Natural killer cell (primary cell): ENCODE measurements at regions of chrX and their contacts with region 1.

Region 1: GRCh38 chrX:55160685-55161552 is 59.2 kb upstream of the PAGE5 start:
- DNase-seq: peak; percentile 89 to 92
- ATAC-seq: peak; percentile 80 to 91 (median 85)
- H3K4me3 ChIP-seq: peak overlapping the region; percentile 84
- H3K4me3 Mint-ChIP-seq: peak overlapping the region; percentile 87
- H3K27ac ChIP-seq: peak overlapping the region; percentile 99
- H3K27ac Mint-ChIP-seq: peak overlapping the region; percentile 94 to 98
- H3K4me1 ChIP-seq: peaks cover 8% of the 10 kb centered on the region
- H3K4me1 Mint-ChIP-seq: peaks cover 6 to 23% of the 10 kb centered on the region in 2 donors
- H3K27me3 ChIP-seq: no peaks in the 10 kb centered on the region
- H3K27me3 Mint-ChIP-seq: peaks cover 8 to 17% of the 10 kb centered on the region in 2 donors
- CTCF ChIP-seq: peak; percentile 58

Region 2: GRCh38 chrX:53422086-53422860 is 1738.6 kb before region 1 on chrX and contains the start of gene SMC1A:
- intact Hi-C with region 1: loop called (anchors 5 kb)
- DNase-seq: peak; percentile 89 to 97
- ATAC-seq: peak; percentile 86 to 96 (median 86)
- H3K4me3 ChIP-seq: peak within 1 kb of the TSS; percentile 98
- H3K4me3 Mint-ChIP-seq: peak within 1 kb of the TSS; percentile 98
- H3K27ac ChIP-seq: peak within 1 kb of the TSS; percentile 99
- H3K27ac Mint-ChIP-seq: peak within 1 kb of the TSS; percentile 97 to 99
- H3K4me1 ChIP-seq: peaks cover 19% of the 10 kb centered on the region
- H3K4me1 Mint-ChIP-seq: peaks cover 25 to 28% of the 10 kb centered on the region in 2 donors
- H3K27me3 ChIP-seq: no peaks in the 10 kb centered on the region
- H3K27me3 Mint-ChIP-seq: no peaks in the 10 kb centered on the region
- CTCF ChIP-seq: no peak
- total RNA-seq, gene SMC1A: 54.2 to 96.3 (median 60.4) TPM

Region 3: DNA sequence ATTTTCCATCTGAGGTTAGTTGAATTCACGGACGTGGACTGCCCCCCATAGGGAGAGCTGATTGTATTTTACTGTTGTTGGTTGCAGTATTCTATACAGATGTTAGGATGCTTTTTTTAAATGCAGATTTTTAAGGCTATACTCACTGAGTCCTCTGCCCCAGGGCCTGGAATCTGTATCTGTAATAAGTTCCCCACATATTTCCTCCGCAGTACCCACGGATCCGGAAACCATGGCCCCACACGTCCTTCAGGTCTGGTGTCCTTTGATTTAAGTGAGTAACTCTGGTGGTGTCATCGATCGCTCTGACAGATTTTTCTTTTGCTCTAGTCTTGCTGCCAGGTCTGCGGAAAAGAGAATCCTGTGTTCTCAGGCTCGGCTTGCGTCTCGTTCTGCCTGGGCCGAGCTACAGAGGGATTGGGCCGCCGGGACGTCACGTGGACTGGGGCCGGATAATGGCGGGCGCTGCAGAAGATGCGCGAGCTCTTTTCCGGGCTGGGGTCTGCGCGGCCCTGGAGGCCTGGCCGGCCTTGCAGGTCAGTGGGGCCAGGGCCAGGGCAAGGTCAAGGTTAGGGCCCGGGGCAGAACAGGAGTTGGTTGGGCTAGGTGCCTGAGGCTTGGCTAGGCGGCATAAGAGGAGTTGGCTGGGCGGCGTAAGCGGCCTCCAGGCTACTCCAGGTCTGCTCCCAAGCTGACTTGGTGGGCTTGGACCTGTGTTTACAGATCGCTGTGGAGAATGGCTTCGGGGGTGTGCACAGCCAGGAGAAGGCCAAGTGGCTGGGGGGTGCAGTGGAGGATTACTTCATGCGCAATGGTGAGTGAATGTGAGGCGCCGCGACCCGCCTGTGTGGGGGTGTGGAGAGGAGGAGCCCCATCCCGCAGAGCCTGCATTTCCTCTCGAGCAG is 720.7 kb before region 1 on chrX and contains the start of gene TSR2:
- intact Hi-C with region 1: loop called (anchors 1 kb)
- DNase-seq: peak; percentile 75 to 87
- ATAC-seq: peak; percentile 95 to 99 (median 97)
- H3K4me3 ChIP-seq: peak within 1 kb of the TSS; percentile 99
- H3K4me3 Mint-ChIP-seq: peak within 1 kb of the TSS; percentile 99
- H3K27ac ChIP-seq: peak within 1 kb of the TSS; percentile 73
- H3K27ac Mint-ChIP-seq: peak within 1 kb of the TSS; percentile 87 to 99
- H3K4me1 ChIP-seq: peaks cover 20% of the 10 kb centered on the region
- H3K4me1 Mint-ChIP-seq: peaks cover 14 to 37% of the 10 kb centered on the region in 2 donors
- H3K27me3 ChIP-seq: no peaks in the 10 kb centered on the region
- H3K27me3 Mint-ChIP-seq: peaks cover 3 to 16% of the 10 kb centered on the region in 2 donors
- CTCF ChIP-seq: no peak
- total RNA-seq, gene TSR2: 39.0 to 40.4 (median 40.0) TPM

Region 4: DNA sequence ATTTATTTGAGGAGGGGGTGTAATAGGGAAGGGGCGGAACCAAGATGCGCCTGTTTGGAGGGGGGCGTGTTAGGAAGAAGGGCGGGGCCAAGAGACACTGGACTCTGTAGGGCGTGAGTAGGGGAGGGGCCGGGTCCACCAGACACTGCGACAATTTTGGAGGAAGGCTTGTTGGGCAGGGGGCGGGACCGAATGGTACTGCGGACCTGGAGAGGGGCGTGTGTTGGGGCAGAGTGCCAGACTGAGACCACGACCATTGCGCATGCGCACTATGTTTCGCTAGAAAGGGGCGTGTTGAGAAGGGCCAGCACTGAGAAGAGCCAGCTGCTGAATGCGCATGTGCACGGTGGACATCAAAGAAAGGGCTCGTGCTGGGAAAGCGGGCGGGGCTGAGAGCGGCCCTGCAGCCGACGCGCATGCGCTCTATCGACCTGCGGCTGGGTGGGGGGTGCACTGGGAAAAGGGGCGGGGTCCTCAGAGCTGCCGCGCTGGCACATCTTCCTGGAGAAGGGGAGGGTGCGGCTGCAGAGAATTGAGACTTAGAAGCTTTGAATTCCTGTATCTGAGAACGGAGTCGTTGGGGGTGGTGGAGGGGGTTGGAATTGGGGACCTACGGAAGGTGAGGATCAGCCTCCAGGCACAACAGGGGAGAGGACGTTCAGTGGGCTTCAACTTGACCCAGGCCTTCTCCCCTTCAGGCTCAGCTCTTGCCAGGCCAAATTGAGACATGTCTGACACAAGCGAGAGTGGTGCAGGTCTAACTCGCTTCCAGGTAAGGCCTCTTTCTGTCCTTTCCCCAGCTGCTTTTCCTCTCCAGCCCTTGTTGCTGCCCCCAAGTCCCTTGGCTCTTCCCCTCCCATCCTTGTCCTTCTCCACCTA is 352.1 kb before region 1 on chrX:
- intact Hi-C with region 1: loop called (anchors 5 kb)
- DNase-seq: peak; percentile 75 to 96
- ATAC-seq: peak; percentile 81 to 89 (median 83)
- H3K4me3 ChIP-seq: peak overlapping the region; percentile 99
- H3K4me3 Mint-ChIP-seq: peak overlapping the region; percentile 88
- H3K27ac ChIP-seq: peak overlapping the region; percentile 92
- H3K27ac Mint-ChIP-seq: peak overlapping the region; percentile 86 to 95
- H3K4me1 ChIP-seq: peaks cover 20% of the 10 kb centered on the region
- H3K4me1 Mint-ChIP-seq: peaks cover 5 to 22% of the 10 kb centered on the region in 2 donors
- H3K27me3 ChIP-seq: no peaks in the 10 kb centered on the region
- H3K27me3 Mint-ChIP-seq: no peaks in the 10 kb centered on the region
- CTCF ChIP-seq: no peak

Region 5: DNA sequence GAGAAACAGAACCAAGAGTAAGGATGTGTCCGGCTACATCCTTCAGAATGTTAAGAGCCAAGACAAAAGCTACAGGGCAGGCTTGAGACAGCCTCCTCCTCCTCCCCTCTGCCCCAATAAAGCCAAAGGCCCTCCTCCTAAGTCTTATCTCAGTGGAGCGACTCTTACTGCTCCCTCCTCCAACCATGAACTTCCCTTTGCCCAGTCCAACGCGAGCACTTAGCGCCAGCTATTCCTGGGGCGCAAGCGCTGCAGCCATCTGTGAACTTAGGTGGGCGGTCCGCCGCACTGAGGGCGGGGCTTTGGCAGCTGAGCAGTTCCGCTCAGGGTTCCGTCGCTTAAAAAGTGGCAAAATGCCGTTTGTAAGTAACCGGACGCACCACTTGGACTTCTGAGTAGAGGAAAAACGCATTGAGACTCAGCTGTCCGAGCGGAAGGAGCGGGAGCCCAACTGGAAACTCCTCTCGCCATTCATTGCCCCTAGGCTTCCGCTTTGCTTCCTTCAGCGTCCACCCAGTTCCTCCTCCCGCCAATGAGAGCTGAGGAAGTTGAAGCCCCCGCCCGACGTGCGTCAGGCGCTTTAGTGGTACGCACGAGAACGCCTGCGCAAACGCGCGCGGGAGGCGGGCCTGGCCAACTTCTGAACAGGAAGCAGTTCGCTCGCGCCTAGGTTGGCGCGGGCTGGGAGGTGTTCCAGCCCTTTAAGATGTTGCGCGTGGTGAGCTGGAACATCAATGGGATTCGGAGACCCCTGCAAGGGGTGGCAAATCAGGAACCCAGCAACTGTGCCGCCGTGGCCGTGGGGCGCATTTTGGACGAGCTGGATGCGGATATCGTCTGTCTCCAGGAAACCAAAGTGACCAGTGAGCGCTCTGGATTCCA is 161.0 kb before region 1 on chrX and contains the start of gene APEX2:
- intact Hi-C with region 1: loop called (anchors 2 kb)
- DNase-seq: peak; percentile 81 to 93
- ATAC-seq: peak; percentile 93 to 97 (median 94)
- H3K4me3 ChIP-seq: peak within 1 kb of the TSS; percentile 68
- H3K4me3 Mint-ChIP-seq: peak within 1 kb of the TSS; percentile 85
- H3K27ac ChIP-seq: peak within 1 kb of the TSS; percentile 94
- H3K27ac Mint-ChIP-seq: peak within 1 kb of the TSS; percentile 95 to 97
- H3K4me1 ChIP-seq: peaks cover 35% of the 10 kb centered on the region
- H3K4me1 Mint-ChIP-seq: peaks cover 15 to 25% of the 10 kb centered on the region in 2 donors
- H3K27me3 ChIP-seq: no peaks in the 10 kb centered on the region
- H3K27me3 Mint-ChIP-seq: peaks cover 0 to 5% of the 10 kb centered on the region in 2 donors
- CTCF ChIP-seq: no peak
- total RNA-seq, gene APEX2: 11.5 to 13.3 (median 12.4) TPM